ENCODE measurements at regions of chr2 and their contacts with region 1.

Region 1: GRCh38 chr2:241508240-241509154 is at the start of gene STK25:
- DNase-seq: peak; percentile 93 to 99 (median 97)
- H3K4me3 ChIP-seq: peak within 1 kb of the TSS; percentile 56 to 100 (median 90)
- H3K27ac ChIP-seq: peak within 1 kb of the TSS; percentile 66 to 97 (median 90)
- H3K27me3 ChIP-seq: no peaks in the 10 kb centered on the region
- CTCF ChIP-seq: peak in 23 of 56 donors; percentile 6 to 54 (median 29)
- total RNA-seq, gene STK25: 138 to 233 (median 178) TPM

Region 2: DNA sequence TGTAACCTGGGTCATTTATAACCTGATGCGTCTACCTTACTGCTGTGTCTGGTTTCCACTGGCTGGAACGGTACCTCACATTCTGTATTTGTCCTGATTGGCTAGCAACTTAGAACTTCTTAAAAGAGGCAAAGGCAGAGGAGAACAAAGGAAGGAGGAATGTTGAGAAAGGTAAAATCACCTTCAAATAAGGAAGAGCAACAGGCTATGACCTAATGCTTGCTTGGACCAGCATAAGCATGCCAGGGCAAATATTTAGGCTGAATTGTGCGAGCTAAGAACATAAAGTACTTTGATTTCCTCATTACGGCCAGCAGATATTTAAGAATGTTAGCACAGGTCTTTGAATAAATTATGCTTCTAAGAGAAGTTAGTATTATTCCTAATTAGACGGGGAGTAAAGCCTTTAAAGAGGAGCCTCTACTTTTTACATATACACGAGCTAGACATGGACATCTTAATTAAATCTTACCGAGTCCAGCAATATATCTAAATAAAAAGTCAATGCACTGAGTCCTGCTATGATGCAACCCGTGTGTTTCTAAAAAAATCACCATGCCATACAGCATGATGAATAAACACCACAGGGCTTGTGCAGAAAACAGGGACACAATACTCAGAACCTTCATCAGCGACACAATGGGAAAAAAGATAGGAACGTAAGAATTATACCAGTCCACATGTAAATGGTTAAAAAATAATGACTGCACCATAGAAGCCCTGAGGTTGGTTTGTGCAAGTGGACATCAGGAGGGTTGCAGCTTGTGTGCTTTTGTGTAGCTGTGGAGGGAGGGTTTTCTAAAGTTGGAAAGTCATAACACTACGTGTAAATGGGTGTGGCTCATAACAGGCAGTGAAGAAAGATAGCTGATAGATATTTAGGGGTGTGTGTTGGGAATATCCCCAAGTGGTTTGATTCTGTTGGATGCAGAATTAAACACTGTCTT is 178.6 kb before region 1 on chr2:
- intact Hi-C with region 1: no loop called
- DNase-seq: no peak
- H3K4me3 ChIP-seq: no peak overlapping the region
- H3K27ac ChIP-seq: no peak overlapping the region
- H3K27me3 ChIP-seq: no peaks in the 10 kb centered on the region
- CTCF ChIP-seq: no peak

Region 3: GRCh38 chr2:241637000-241637791 is 128.7 kb after region 1 on chr2 and contains the starts of genes ATG4B and THAP4:
- intact Hi-C with region 1: loop called (anchors 1 to 5 kb)
- DNase-seq: peak; percentile 69 to 92 (median 81)
- H3K4me3 ChIP-seq: peak within 1 kb of the TSS; percentile 57 to 99 (median 86)
- H3K27ac ChIP-seq: peak within 1 kb of the TSS; percentile 91 to 100 (median 98)
- H3K27me3 ChIP-seq: no peaks in the 10 kb centered on the region
- CTCF ChIP-seq: peak in 24 of 56 donors; percentile 7 to 48 (median 22)
- total RNA-seq, gene ATG4B: 79.3 to 164 (median 118) TPM
- total RNA-seq, gene THAP4: 35.1 to 69.3 (median 54.0) TPM